Ascending aorta (tissue), 2 donors: ENCODE measurements at regions of chr15 and their contacts with region 1.

Region 1: DNA sequence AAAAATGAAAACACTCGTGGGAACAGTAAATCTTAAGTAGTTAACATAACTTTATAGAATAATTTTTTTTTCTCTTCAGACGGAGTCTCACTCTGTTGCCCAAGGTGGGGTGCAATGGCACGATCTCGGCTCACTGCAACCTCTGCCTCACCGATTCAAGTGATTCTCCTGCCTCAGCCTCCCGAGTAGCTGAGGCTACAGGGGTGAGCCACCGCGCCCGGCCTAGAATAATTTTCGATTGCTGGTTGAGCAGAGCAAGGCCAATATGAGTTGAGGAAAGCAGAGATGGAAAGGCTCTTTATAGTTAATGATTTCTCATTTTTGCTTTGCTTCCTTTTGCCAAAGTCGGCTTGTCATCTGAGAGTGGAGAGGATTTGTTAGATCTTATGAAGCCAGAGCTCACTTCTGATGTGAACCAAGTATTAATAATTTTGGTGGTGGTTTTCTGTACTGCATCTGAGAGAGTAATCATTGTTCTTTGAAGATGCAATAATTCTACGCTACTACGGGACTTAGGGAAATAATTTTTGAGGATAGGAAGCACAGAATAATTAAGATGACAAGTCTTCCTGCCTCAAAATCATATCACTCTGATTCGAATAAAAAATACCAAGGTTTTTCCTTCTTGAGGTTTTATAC is 1.6 kb upstream of the GOLM2 start:
- DNase-seq: no peak
- H3K4me3 ChIP-seq: peak overlapping the region; percentile 80
- H3K27ac ChIP-seq: no peak overlapping the region
- H3K4me1 ChIP-seq: peaks cover 4 to 18% of the 10 kb centered on the region in 2 donors
- H3K27me3 ChIP-seq: no peaks in the 10 kb centered on the region
- CTCF ChIP-seq: no peak

Region 2: DNA sequence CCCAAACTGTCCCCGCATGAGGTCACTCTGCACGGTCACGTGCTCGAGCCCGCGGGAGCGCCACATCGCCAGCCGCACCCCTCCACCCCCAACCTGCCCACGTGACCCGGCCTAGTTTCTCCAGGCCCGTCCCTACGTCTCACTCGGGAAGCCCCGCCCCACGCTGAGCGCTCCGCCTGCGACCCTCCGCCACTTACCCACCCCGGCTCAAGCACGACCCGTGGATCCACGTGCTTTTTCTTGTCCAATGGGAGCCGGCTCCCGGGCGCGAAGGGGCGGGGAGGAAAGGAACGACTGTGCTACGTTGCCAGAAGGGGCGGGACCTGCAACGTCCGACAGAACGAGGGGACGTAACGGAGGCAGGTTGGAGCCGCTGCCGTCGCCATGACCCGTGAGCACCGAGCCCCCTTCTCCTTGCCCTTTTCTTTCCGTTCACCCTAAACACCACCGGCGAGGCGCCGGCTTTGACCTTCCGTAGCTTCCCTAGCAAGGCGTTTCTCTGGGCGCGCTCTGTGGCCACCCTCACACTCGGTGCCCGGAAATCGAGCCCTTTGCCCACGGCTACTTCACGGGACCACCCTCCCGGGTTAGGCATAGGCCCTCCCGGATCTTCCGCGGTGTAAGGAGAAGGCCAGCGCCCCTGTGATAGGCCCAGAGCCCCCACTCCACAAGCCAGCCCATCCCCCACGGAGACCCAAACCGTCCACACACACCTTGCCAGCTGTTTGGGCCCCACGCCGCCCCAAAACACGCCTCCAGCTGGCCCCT is 494.8 kb before region 1 on chr15 and contains the start of gene SERF2:
- intact Hi-C with region 1: loop called (anchors 10 kb)
- DNase-seq: peak; percentile 100
- H3K4me3 ChIP-seq: peak within 1 kb of the TSS; percentile 74 to 99
- H3K27ac ChIP-seq: peak within 1 kb of the TSS; percentile 88 to 99
- H3K4me1 ChIP-seq: peaks cover 19 to 26% of the 10 kb centered on the region in 2 donors
- H3K27me3 ChIP-seq: no peaks in the 10 kb centered on the region
- CTCF ChIP-seq: no peak
- total RNA-seq, gene SERF2: 733 TPM

Region 3: DNA sequence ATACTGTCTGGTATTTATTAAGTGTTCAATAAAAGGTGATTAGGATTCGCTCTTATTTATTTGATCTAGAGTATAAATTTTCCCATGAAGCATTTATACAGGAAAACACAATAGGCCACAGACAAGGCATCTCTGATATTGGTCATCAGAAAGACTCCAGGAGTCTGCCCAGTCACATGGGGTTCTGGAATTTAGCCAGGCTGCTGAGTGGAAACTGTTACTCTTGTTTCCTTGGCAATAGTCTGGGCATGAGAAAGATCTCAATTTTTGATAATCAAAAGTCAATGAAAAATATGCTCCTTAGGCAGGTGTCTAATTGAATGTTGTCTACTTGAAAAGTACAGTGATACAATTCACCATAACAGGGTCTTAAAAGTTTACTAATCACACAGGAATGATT is 253.0 kb before region 1 on chr15:
- intact Hi-C with region 1: no loop called
- DNase-seq: peak in 1 of 2 donors; percentile 67
- H3K4me3 ChIP-seq: no peak overlapping the region
- H3K27ac ChIP-seq: no peak overlapping the region
- H3K4me1 ChIP-seq: peaks cover 0 to 12% of the 10 kb centered on the region in 2 donors
- H3K27me3 ChIP-seq: no peaks in the 10 kb centered on the region
- CTCF ChIP-seq: no peak

Region 4: GRCh38 chr15:44340410-44340809 is 53.5 kb after region 1 on chr15:
- intact Hi-C with region 1: loop called (anchors 2 kb)
- DNase-seq: no peak
- H3K4me3 ChIP-seq: no peak overlapping the region
- H3K27ac ChIP-seq: peak overlapping the region; percentile 27 to 72
- H3K4me1 ChIP-seq: peaks cover 0 to 3% of the 10 kb centered on the region in 2 donors
- H3K27me3 ChIP-seq: no peaks in the 10 kb centered on the region
- CTCF ChIP-seq: no peak

Region 5: DNA sequence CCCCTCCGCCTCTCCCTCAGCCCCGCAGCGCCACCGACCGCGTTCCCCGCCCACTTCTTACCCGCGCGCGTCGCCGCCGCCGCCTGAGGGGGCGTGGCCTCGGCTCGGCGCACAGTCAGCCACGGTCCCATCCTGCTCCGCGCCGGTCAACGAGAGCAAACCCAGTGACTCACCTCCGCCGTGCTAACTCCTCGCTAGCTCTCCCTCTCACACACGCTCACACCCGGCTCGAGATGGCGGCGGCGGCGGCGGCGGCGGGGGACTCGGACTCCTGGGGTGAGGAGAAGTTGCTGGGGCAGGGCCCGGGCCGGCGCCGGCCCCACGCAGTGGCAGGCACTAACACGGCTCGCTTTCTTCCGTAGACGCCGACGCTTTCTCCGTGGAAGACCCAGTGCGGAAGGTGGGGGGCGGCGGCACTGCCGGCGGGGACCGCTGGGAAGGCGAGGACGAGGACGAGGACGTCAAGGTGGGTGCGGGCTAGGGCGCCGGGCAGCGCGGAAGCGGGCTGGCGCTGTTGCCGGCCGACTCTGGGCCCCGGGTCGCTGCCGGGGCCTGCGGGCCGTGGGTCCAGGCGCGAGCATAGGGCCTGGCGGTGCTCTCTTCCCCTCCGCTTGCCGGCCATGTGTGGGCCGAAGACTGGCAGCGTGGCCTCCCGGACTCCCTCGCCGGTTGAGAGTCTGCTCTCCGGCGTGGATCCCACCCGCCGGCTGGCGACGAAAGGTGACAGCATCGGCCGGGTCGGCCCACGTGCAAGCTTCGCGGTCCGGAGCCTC is 250.2 kb after region 1 on chr15 and contains the start of gene EIF3J:
- intact Hi-C with region 1: loop called (anchors 2 kb)
- DNase-seq: peak; percentile 84 to 97
- H3K4me3 ChIP-seq: peak within 1 kb of the TSS; percentile 75 to 88
- H3K27ac ChIP-seq: peak within 1 kb of the TSS; percentile 96 to 98
- H3K4me1 ChIP-seq: peaks cover 8 to 33% of the 10 kb centered on the region in 2 donors
- H3K27me3 ChIP-seq: no peaks in the 10 kb centered on the region
- CTCF ChIP-seq: no peak
- total RNA-seq, gene EIF3J: 22.8 TPM

Region 6: DNA sequence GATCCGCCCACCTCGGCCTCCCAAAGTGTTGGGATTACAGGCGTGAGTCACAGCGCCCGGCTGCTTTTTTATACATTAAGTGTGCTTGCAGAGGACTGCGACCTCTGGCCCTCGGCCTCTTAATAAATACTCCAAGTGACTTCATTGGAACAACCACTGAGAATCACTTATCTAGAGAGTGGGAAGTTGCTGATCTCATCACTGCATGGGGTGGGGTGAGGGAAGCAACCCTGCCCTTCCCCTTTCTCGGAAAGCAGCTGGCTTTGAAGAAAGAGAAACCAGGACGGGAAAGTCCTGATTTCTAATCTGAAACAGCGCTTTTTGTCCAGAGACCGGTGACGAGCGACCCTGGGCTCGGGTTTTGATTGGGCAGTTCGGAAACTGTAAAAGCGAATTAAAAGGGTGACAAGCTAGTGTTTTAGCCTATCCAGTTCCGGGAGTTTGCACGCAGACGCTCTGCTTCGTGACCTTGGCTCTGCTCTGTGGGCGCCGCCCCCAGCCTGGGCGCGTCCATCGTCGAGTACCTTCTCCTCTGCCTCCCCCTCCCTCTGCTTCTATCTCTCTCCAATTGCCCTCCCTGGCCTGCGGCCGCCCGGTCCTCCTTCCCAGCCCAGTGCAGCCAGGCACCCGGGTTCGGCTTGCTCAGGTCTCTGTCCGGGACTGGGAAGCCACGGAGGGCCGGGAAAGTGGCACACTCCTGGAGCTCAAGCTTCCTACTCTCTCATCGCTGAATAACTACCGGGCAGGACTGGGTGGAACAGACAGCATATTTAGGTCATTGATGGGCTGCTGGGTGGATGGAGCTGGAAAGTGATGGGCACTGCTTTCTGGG is 441.9 kb after region 1 on chr15:
- intact Hi-C with region 1: loop called (anchors 5 kb)
- DNase-seq: peak; percentile 95 to 99
- H3K4me3 ChIP-seq: peak overlapping the region; percentile 72 to 77
- H3K27ac ChIP-seq: peak overlapping the region; percentile 88 to 96
- H3K4me1 ChIP-seq: peaks cover 0 to 21% of the 10 kb centered on the region in 2 donors
- H3K27me3 ChIP-seq: no peaks in the 10 kb centered on the region
- CTCF ChIP-seq: no peak